ENCODE measurements at regions of chr5 and their contacts with region 1.

Region 1: GRCh38 chr5:148791334-148791667 is 35.1 kb upstream of the ADRB2 start:
- DNase-seq: no peak
- H3K4me3 Mint-ChIP-seq: no peak overlapping the region
- H3K27ac Mint-ChIP-seq: no peak overlapping the region
- H3K4me1 Mint-ChIP-seq: peaks cover 34% of the 10 kb centered on the region
- H3K27me3 Mint-ChIP-seq: peaks cover 16% of the 10 kb centered on the region

Region 2: DNA sequence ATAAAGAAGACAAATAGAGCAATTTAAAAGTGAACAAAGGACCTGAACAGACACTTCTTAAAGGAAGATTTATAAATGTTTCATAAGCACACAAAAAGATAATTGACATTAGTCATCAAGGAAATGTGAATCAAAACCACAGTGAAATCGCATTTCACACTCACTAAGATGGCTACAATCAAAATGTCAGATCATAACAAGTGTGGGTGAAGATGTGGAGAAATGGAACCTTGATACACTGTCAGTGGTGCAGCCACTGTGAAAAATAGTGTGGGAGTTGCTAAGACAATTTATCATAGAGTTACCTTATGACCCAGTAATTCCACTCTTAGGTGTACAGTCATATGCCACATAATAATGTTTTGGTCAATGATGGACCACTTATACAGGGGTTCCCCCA is 82.4 kb before region 1 on chr5:
- intact Hi-C with region 1: loop called (anchors 1 kb)
- DNase-seq: no peak
- H3K4me3 Mint-ChIP-seq: no peak overlapping the region
- H3K27ac Mint-ChIP-seq: peak overlapping the region; percentile 68
- H3K4me1 Mint-ChIP-seq: peaks cover 33% of the 10 kb centered on the region
- H3K27me3 Mint-ChIP-seq: peaks cover 5% of the 10 kb centered on the region

Region 3: GRCh38 chr5:148768806-148769415 is 22.4 kb before region 1 on chr5:
- intact Hi-C with region 1: no loop called
- DNase-seq: no peak
- H3K4me3 Mint-ChIP-seq: no peak overlapping the region
- H3K27ac Mint-ChIP-seq: no peak overlapping the region
- H3K4me1 Mint-ChIP-seq: no peaks in the 10 kb centered on the region
- H3K27me3 Mint-ChIP-seq: peaks cover 48% of the 10 kb centered on the region

Region 4: DNA sequence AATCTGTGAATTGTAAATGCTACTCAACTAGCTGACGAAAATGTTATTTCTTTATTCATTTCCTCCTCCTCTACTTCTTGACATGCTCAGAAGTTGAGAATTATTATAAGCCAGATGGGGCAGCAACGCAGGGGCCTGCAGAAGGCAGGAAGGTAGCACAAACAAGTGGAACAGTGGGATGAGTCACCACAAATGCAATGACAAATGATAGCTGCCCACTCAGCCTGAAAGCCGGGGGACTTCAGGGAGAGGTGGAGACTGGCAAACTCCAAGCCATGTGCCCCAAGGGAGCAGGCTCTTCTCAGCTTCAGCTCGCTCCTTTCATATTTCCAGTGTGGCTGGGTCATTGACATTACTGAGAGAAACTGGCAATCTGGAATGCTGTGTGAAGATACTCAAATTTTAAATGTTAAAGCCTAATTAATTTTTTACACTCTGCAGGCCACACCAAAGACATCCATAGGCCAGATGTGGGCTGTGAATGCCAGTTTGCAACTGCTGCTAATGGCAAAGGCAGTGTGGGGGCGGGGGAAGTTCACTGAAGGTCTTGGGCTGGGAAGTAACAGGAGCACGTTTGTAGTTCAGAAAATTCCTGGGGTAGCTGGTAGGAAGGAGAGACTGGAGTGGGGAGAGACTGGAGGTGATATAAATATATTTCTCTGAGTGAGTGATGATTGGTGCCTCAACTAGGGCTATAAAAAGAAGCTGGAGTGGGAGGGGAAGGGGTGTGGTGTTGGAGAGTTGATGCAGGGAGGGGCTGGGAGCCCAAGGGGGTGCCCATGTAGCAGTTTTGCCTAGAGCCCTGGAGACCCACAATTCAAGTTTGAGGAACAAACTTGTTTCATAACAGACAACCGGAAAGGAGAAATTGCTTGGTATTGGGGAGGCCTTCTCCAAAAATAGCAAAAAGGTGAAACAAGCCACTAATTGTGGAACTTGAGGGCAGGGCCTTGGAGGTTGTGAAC is 14.3 kb after region 1 on chr5:
- intact Hi-C with region 1: loop called (anchors 1 kb)
- DNase-seq: no peak
- H3K4me3 Mint-ChIP-seq: peak overlapping the region; percentile 11
- H3K27ac Mint-ChIP-seq: peak overlapping the region; percentile 76
- H3K4me1 Mint-ChIP-seq: peaks cover 58% of the 10 kb centered on the region
- H3K27me3 Mint-ChIP-seq: no peaks in the 10 kb centered on the region

Region 5: DNA sequence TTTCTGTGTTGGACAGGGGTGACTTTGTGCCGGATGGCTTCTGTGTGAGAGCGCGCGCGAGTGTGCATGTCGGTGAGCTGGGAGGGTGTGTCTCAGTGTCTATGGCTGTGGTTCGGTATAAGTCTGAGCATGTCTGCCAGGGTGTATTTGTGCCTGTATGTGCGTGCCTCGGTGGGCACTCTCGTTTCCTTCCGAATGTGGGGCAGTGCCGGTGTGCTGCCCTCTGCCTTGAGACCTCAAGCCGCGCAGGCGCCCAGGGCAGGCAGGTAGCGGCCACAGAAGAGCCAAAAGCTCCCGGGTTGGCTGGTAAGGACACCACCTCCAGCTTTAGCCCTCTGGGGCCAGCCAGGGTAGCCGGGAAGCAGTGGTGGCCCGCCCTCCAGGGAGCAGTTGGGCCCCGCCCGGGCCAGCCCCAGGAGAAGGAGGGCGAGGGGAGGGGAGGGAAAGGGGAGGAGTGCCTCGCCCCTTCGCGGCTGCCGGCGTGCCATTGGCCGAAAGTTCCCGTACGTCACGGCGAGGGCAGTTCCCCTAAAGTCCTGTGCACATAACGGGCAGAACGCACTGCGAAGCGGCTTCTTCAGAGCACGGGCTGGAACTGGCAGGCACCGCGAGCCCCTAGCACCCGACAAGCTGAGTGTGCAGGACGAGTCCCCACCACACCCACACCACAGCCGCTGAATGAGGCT is 34.9 kb after region 1 on chr5 and contains the start of gene ADRB2:
- intact Hi-C with region 1: loop called (anchors 1 kb)
- DNase-seq: peak; percentile 85
- H3K4me3 Mint-ChIP-seq: peak within 1 kb of the TSS; percentile 85
- H3K27ac Mint-ChIP-seq: peak within 1 kb of the TSS; percentile 62
- H3K4me1 Mint-ChIP-seq: peaks cover 18% of the 10 kb centered on the region
- H3K27me3 Mint-ChIP-seq: peaks cover 67% of the 10 kb centered on the region
- total RNA-seq, gene ADRB2: 0.21 and 0.30 TPM in 2 replicates

Region 6: DNA sequence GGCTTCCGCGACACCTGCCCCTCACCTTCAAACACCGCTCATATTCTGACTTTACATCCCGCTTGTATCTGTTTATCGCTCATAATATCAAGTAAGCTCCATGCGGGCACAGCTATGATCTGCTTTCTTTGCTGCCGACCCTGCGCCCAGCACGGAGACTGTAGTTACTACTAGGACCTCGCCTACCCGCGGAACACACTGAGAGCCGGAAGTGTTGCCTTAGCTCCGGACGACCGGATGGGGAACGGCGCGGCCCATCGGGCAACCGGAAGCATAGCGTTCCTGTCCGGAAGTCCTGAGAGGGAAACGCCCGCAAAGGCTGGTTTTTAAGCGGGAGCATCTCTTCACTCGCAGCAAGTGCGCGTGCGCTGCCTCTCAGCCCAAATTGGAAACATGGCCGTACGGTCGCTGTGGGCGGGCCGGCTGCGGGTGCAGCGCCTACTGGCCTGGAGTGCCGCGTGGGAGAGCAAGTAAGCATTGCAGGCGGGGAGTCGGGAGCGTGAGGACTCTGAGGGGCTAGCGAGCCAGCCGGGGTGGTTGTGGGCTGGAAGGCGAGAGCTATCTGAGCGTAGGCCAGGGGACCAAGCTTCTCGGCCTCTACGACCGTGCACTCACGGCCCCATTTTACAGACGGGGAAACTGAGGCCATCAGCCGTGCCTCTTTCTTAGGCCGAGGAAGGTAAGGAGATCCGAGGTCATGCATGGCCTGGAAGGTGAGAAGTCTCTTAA is 554.0 kb after region 1 on chr5 and contains the start of gene GRPEL2:
- intact Hi-C with region 1: loop called (anchors 5 kb)
- DNase-seq: peak; percentile 88
- H3K4me3 Mint-ChIP-seq: peak within 1 kb of the TSS; percentile 98
- H3K27ac Mint-ChIP-seq: peak within 1 kb of the TSS; percentile 94
- H3K4me1 Mint-ChIP-seq: peaks cover 42% of the 10 kb centered on the region
- H3K27me3 Mint-ChIP-seq: peaks cover 1% of the 10 kb centered on the region
- total RNA-seq, gene GRPEL2: 22.5 TPM in 2 replicates

Measured in activated T-helper 2 cell treated with anti-CD3 and anti-CD28 coated beads, Interferon-gamma antibody, Interleukin-2, Interleukin-4, amounts not matched to agents 10 μg/mL and 5 μg/mL and 100 μg/mL, durations not matched to agents 14 hours and 24 hours and 36 hours (primary cell).